ENCODE measurements at regions of chr6 and their contacts with region 1.

Region 1: GRCh38 chr6:141140905-141141304 is 991.8 kb upstream of the GJE1 start:
- DNase-seq: no peak
- ATAC-seq: no peak

Region 2: DNA sequence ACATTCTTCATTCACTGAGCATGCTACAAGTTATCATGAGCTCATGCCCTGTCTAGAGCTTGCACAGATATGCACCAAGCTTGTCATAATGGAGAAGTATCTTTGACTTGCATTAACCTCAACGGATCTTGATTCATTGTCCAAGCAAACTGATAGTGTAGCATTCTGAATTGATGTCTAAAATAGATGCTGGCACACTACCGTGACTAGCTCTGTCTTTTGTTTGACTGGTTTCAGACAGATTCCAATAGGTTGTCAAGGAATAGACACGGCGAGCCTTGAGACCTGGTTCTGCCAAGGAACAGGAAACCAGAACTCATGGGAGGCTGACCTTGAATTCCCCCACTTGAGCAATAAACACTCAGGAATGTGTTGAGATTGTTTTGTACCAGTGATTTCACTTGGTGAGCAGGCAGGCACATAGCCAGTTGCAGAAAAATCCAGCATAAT is 161.2 kb before region 1 on chr6:
- intact Hi-C with region 1: loop called (anchors 10 kb)
- DNase-seq: no peak
- ATAC-seq: peak; percentile 84